Tibial artery (tissue), 4 donors: ENCODE measurements at regions of chr2 and their contacts with region 1.

Region 1: DNA sequence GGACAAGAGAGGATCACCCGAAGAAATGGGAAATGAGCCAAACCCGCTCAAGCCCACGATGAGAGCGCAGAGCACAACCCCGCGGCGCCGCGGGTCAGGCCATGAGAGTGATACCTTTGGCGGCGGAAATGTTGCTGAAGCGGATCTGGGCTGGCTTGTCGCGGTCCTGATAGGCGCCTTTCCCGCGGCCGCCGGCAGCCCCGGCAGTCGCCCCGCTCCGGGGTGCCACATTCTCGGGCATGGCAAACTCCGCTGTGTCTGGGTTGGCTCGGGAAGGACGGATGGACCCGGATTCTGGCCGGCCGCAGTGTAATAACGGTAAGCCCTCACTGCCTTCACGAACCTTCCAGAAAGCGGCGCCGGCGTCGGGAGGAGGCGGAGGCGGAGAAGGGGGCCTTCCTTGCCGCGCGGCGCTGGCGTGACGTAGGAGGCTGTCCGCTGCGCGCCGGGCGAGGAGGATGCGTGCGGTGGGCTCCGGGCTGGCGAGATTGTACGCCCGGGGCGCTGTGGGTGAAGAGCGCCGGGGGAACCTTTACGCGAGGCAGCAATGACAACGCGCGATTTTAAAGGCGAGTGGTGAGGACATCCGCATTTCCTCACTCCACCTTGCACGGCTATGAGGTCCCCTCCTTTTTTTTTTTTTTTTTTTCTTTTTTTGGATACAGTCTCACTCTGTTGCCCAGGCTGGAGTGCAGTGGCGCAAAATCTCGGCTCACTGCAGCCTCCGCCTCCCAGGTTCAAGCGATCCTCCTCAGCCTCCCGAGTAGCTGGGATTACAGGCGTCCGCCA is at the start of gene CCT4:
- DNase-seq: peak; percentile 83 to 92
- H3K4me3 ChIP-seq: peak within 1 kb of the TSS; percentile 76
- H3K27ac ChIP-seq: peak within 1 kb of the TSS; percentile 90 to 93
- H3K4me1 ChIP-seq: peaks cover 0 to 24% (median 17%) of the 10 kb centered on the region in 4 donors
- H3K27me3 ChIP-seq: no peaks in the 10 kb centered on the region
- CTCF ChIP-seq: peak in 1 of 2 experiments; percentile 6

Region 2: DNA sequence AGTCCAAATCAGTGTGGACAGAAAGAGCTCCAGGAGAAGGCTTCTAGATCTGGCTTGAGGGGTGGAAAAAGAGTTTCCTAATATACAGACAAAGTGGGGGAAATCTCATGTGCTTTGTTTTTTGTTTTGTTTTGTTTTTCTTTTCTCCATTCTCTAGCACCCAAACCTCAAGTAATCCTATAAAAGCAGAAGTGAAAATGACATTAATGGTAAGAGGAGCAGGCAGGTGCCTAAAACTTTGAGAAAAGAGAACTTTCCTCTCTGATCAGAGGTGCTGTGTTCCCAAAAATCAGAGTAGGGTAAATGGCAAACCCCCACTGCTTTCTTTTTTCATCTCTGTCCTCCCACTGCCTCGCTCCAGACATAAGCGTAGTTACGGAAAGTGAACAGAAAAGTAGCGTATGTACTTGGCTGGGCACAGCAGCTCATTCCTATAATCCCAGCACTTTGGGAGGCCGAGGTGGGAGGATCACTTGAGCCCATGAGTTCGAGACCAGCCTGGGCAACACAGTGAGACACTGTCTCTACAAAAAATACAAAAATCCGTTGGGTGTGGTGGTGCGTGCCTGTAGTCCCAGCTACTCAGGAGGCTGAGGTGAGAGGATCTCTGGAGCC is 112.4 kb before region 1 on chr2:
- intact Hi-C with region 1: no loop called
- DNase-seq: no peak
- H3K4me3 ChIP-seq: no peak overlapping the region
- H3K27ac ChIP-seq: no peak overlapping the region
- H3K4me1 ChIP-seq: no peaks in the 10 kb centered on the region
- H3K27me3 ChIP-seq: peaks cover 0 to 3% of the 10 kb centered on the region in 2 donors
- CTCF ChIP-seq: no peak

Region 3: DNA sequence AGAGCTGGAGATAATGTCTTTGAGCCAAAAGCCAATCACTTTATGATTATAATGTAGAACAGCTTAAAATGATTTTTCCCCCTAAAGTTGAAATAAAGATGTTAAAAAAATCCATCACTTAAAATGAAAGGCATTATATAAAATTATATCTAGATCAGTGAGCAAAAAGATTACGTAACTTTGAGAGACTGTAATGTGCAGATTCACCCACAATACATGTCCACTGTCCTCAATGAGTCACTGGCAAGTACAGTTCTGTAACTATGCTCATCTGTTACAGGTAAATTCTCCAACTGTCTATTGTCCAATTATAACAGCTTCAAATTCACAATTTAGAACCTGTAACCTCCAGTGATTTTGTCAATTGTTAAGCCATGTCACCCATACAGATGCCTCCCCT is 53.6 kb before region 1 on chr2:
- intact Hi-C with region 1: no loop called
- DNase-seq: no peak
- H3K4me3 ChIP-seq: no peak overlapping the region
- H3K27ac ChIP-seq: no peak overlapping the region
- H3K4me1 ChIP-seq: no peaks in the 10 kb centered on the region
- H3K27me3 ChIP-seq: no peaks in the 10 kb centered on the region
- CTCF ChIP-seq: no peak

Region 4: GRCh38 chr2:62505750-62506420 is 617.4 kb after region 1 on chr2 and contains the start of gene TMEM17:
- intact Hi-C with region 1: loop called (anchors 5 kb)
- DNase-seq: peak; percentile 90 to 96
- H3K4me3 ChIP-seq: peak within 1 kb of the TSS; percentile 70 to 79
- H3K27ac ChIP-seq: peak within 1 kb of the TSS; percentile 92
- H3K4me1 ChIP-seq: peaks cover 0 to 10% (median 5%) of the 10 kb centered on the region in 4 donors
- H3K27me3 ChIP-seq: no peaks in the 10 kb centered on the region
- CTCF ChIP-seq: no peak